HEK293T (cell line): ENCODE measurements at regions of chr17 and their contacts with region 1.

Region 1: DNA sequence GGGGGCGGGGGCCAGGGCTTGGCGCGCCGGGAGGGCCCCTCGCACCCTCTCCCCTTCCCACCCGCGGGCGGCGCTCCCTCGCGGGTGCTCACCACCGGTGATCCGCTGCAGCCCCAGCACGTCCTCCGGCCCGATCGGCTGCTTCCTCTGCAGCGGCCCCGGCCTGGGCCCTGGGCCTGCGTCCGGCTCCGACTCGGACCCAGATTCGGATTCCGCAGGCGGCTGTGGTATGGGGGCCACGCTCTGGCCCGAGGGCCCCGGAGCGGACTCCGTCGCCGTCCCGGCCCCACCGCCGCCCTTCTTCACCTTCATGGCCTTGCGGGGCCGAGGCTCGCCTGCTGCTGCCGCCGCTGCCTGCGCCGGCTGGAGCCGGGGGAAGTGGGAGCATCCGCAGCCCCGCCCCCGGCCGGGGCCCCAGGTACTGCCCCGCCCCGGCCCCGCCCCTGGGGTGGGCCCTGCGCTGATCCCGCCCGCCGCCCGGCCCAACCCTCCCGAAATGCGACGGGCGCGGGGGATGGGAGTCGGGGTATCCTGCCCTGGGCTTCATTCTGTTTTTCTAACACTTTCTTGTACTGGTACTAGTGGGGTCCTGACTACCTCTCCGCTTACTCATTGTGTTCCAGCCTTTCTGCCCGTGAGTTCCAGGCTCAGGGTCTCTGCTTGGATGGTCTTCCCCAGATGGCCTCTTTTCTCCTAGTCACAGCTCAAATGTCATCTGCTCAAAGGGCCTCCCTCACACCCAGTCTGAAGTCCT is at the start of gene UNC119:
- DNase-seq: peak; percentile 86

Region 2: DNA sequence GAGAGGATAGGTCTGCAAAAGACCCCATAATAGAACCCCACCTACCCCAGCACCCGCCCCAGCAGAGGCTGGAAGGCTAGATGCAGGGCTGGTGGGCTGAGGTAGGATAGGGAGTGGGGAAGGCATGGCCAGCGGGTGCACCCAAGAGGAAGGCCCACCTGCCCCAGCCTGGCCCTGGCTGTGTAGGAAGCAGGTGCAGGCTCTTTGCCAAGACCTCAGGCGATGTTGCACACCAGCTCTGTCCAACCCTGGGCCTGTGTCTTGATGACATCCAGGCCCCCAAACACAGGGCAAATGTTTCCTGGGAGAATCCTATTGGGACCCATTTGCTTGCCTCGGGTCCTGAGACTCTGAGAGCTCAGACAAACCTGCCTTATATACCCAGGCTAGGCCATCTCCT is 12.2 kb before region 1 on chr17:
- CTCF ChIA-PET with region 1: interaction called, 16 read pairs
- POLR2A ChIA-PET with region 1: interaction called, 4 read pairs
- DNase-seq: no peak

Region 3: GRCh38 chr17:28571255-28572122 is 19.1 kb after region 1 on chr17 and contains the start of gene PIGS:
- CTCF ChIA-PET with region 1: interaction called, 6 read pairs
- POLR2A ChIA-PET with region 1: interaction called, 35 read pairs
- DNase-seq: peak; percentile 88